SK-N-SH (cell line): ENCODE measurements at regions of chr17 and their contacts with region 1.

Region 1: DNA sequence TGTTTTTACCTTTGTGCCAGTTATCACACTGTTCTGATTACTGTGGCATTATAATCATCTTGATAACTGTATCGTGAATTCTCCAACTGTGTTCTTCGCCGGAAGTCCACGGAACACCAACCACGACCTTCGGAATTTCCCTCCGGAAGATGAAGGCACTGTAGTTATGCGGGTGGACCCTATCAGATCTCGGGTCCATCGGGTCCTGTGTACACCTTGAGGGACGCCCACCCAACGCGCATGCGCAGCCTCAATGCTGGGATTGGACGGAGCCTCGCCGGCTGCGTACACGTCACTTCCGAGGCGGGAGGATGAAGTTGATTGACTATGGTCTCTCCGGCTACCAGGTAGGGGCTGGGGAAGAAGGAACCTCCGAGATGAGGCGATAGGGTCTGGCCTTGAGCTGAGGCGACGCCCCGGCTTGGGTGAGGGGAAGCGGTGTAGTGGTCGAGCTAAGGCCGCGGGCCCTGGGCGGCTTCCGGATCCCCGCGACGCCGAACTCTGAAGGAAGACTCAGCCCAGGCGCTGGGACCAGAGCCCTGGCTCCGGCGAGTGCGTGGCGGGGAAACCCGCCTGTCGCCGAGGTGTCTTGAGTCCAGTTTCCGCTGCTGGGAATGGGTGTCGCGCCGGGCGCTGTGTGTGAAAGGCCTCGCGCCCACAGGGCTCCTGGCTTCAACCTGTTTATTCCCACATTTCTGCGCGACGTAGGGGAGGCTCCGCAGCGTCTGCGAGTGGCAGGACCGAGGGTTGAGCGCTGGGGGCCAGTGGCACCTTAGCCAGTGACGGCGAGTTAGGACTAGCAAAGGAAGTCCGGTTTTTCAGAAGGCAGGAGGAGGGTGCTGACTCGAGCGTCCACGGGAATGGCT is at the start of gene DHRS7B:
- DNase-seq: peak; percentile 96
- H3K4me3 ChIP-seq: peak within 1 kb of the TSS; percentile 68 to 76
- H3K27ac ChIP-seq: peak within 1 kb of the TSS; percentile 60 to 79; a peak in 3 of 4 replicates
- H3K4me1 ChIP-seq: peaks cover 4 to 8% of the 10 kb centered on the region in 2 experiments; a peak in 3 of 4 replicates
- H3K27me3 ChIP-seq: no peaks in the 10 kb centered on the region
- CTCF ChIP-seq: no peak
- EP300 ChIP-seq: no peak
- RAD21 ChIP-seq: no peak
- polyA plus RNA-seq, gene DHRS7B: 17.8 and 24.2 TPM in 2 replicates

Region 2: GRCh38 chr17:20920815-20921199 is 206.1 kb before region 1 on chr17:
- CTCF ChIA-PET with region 1: no interaction called
- POLR2A ChIA-PET with region 1: no interaction called
- DNase-seq: no peak
- H3K4me3 ChIP-seq: peak overlapping the region in 1 of 2 experiments; percentile 1; a peak in 1 of 4 replicates
- H3K27ac ChIP-seq: peak overlapping the region; percentile 69 to 96
- H3K4me1 ChIP-seq: peaks cover 3 to 46% of the 10 kb centered on the region in 2 experiments
- H3K27me3 ChIP-seq: no peaks in the 10 kb centered on the region
- CTCF ChIP-seq: no peak
- EP300 ChIP-seq: peak in 1 of 2 experiments; percentile 45; a peak in 1 of 4 replicates
- RAD21 ChIP-seq: no peak

Region 3: GRCh38 chr17:21140911-21141310 is 14.0 kb after region 1 on chr17:
- CTCF ChIA-PET with region 1: interaction called, 42 read pairs
- POLR2A ChIA-PET with region 1: no interaction called
- DNase-seq: no peak
- H3K4me3 ChIP-seq: no peak overlapping the region
- H3K27ac ChIP-seq: no peak overlapping the region
- H3K4me1 ChIP-seq: peaks cover 0 to 9% of the 10 kb centered on the region in 2 experiments; a peak in 1 of 4 replicates
- H3K27me3 ChIP-seq: no peaks in the 10 kb centered on the region
- CTCF ChIP-seq: no peak
- EP300 ChIP-seq: no peak
- RAD21 ChIP-seq: no peak

Region 4: GRCh38 chr17:21189361-21189760 is 62.5 kb after region 1 on chr17:
- CTCF ChIA-PET with region 1: interaction called, 17 read pairs
- POLR2A ChIA-PET with region 1: no interaction called
- DNase-seq: no peak
- H3K4me3 ChIP-seq: no peak overlapping the region
- H3K27ac ChIP-seq: no peak overlapping the region
- H3K4me1 ChIP-seq: peaks cover 0 to 12% of the 10 kb centered on the region in 2 experiments; a peak in 1 of 4 replicates
- H3K27me3 ChIP-seq: no peaks in the 10 kb centered on the region
- CTCF ChIP-seq: no peak
- EP300 ChIP-seq: no peak
- RAD21 ChIP-seq: no peak

Region 5: DNA sequence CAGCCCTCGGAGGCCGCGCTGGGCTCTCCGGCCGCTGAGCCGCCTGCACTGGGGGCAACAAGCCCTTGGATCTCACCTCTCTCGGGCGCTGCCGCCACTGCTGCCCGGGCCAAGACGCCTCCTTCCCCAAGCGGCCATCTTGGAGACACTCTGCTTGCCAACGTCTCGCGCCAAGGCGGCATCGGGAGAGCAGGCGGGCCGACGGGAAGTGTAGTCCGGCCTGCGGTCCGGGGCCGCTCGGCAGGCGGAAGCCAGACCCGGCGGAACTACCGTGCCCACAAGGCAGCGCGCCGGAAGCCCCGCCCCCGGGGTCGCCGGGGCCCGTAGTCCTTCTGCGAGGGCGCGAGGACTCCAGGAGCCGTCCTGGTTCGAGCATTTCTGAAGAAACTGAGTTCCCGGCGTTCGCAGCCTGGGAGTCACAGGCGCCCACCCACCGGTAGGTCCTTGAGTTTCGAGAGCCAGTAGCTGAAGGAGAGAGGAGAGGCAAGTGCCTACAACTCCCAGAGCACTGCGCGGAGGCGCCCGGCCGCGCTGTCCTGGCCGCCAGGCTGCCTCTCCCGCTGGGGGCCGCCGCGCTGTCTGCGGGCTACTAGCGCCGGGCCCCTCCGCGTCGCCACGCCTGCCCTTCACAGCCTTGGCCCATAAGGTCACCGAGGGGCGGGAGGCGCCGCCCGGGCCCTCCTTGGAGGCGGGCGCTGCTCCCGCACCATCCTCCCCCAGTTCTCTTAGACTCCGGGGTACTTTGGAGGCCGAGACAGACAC is 87.3 kb after region 1 on chr17 and contains the start of gene TMEM11:
- CTCF ChIA-PET with region 1: interaction called, 16 read pairs
- POLR2A ChIA-PET with region 1: no interaction called
- DNase-seq: peak; percentile 99
- H3K4me3 ChIP-seq: peak within 1 kb of the TSS; percentile 97 to 99
- H3K27ac ChIP-seq: peak within 1 kb of the TSS; percentile 91 to 95
- H3K4me1 ChIP-seq: peaks cover 10 to 25% of the 10 kb centered on the region in 2 experiments; a peak in 2 of 4 replicates
- H3K27me3 ChIP-seq: no peaks in the 10 kb centered on the region
- CTCF ChIP-seq: no peak; the same call in 1 of the 2 replicates
- EP300 ChIP-seq: no peak
- RAD21 ChIP-seq: no peak
- polyA plus RNA-seq, gene TMEM11: 43.8 and 52.3 TPM in 2 replicates

Region 6: DNA sequence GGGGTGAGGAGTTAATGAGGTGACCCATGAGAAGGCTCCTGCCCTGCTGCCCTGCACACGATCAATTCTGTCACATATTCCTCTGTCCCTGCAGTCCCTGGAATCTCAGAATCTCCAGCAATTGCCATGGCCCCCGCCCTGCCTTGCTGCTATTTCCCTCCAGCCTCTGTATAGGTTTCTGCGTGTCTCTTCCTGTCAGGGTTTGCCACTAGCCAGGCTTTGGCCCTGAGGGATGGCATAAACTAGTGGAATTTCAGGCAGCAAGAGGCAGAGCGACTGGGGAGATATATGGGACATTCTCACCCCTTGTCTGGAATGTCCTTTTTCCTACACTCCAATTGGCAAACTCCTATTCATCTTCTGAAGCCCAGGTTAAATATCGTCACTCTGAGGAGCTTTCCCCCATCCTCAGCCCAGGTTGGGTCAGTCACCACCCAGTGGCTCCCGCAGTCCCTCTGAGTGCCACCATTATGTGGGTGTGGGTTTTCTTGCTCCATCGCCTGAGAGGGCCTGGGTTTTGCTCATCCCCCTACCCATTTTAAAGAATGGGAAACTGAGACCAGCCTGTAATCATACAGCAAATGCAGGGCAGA is 141.8 kb after region 1 on chr17:
- CTCF ChIA-PET with region 1: interaction called, 91 read pairs
- POLR2A ChIA-PET with region 1: no interaction called
- DNase-seq: no peak
- H3K4me3 ChIP-seq: no peak overlapping the region
- H3K27ac ChIP-seq: no peak overlapping the region
- H3K4me1 ChIP-seq: no peaks in the 10 kb centered on the region
- H3K27me3 ChIP-seq: no peaks in the 10 kb centered on the region
- CTCF ChIP-seq: no peak
- EP300 ChIP-seq: no peak
- RAD21 ChIP-seq: no peak

Region 7: GRCh38 chr17:21275579-21276263 is 148.8 kb after region 1 on chr17:
- CTCF ChIA-PET with region 1: interaction called, 91 read pairs
- POLR2A ChIA-PET with region 1: no interaction called
- DNase-seq: peak; percentile 97
- H3K4me3 ChIP-seq: peak overlapping the region; percentile 54 to 63
- H3K27ac ChIP-seq: peak overlapping the region in 1 of 2 experiments; percentile 36; a peak in 1 of 4 replicates
- H3K4me1 ChIP-seq: peaks cover 6 to 14% of the 10 kb centered on the region in 2 experiments; a peak in 2 of 4 replicates
- H3K27me3 ChIP-seq: no peaks in the 10 kb centered on the region
- CTCF ChIP-seq: no peak
- EP300 ChIP-seq: no peak
- RAD21 ChIP-seq: no peak

Region 8: GRCh38 chr17:21284319-21285163 is 157.7 kb after region 1 on chr17 and contains the start of gene MAP2K3:
- CTCF ChIA-PET with region 1: interaction called, 91 read pairs
- POLR2A ChIA-PET with region 1: no interaction called
- DNase-seq: peak; percentile 99
- H3K4me3 ChIP-seq: peak within 1 kb of the TSS; percentile 90 to 91
- H3K27ac ChIP-seq: peak within 1 kb of the TSS; percentile 67 to 98
- H3K4me1 ChIP-seq: peaks cover 35 to 56% of the 10 kb centered on the region in 2 experiments
- H3K27me3 ChIP-seq: no peaks in the 10 kb centered on the region
- CTCF ChIP-seq: no peak
- EP300 ChIP-seq: no peak
- RAD21 ChIP-seq: no peak
- polyA plus RNA-seq, gene MAP2K3: 21.2 and 30.0 TPM in 2 replicates